Gastrocnemius medialis (tissue), 4 donors: ENCODE measurements at regions of chr6 and their contacts with region 1.

Region 1: GRCh38 chr6:111605100-111605751 is 452 bp downstream of the TRAF3IP2 start:
- DNase-seq: peak; percentile 80 to 92
- ATAC-seq: peak; percentile 58 to 61
- H3K4me3 ChIP-seq: peak overlapping the region; percentile 67 to 91 (median 72)
- H3K27ac ChIP-seq: peak overlapping the region; percentile 92 to 99 (median 97)
- H3K4me1 ChIP-seq: peaks cover 45 to 53% of the 10 kb centered on the region in 2 donors
- H3K27me3 ChIP-seq: no peaks in the 10 kb centered on the region
- CTCF ChIP-seq: no peak
- POLR2A ChIP-seq: peak; percentile 51 to 75

Region 2: DNA sequence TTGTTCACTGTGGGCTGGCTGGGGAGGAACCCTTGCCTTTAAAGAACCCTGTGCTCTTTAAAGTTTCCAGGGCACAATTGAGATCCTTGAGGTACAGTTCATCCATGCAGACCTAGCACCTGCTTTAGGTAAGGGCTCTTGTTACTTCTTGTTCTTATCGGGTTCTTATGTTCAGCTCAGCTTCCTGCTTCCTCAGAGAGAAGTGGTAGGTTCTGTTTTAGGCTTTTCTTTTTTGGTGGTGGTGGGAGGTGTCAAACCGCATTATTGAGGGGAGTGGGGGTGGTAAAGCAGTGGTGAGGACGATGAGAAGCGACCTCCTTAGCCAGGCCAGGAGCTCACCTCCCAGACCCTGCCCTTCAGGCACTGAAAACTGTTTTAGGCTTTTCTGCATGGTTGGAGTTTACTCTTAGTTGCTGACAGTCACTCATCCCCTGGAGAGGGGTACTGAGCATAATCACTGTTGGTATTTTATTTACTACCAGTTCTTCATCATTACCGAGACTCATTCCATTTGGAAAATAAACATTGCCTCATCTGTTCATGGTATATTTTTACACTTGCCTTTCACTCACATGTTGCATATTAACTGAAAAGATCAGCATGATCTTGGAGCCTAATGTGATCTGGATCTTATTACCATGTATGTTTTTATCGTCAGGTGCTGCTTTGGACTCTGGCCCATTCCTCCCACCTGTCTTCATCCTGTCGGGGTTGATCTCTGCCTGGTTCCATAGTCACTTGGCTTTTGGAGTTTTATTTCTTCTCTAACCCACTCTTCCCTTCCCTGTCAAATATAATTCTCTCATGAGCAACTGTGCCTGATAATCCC is 482.6 kb before region 1 on chr6:
- in situ Hi-C with region 1: no loop called
- intact Hi-C with region 1: loop called (anchors 5 kb)
- DNase-seq: peak; percentile 75 to 80
- ATAC-seq: peak; percentile 79 to 82
- H3K4me3 ChIP-seq: peak overlapping the region; percentile 21 to 48 (median 40)
- H3K27ac ChIP-seq: peak overlapping the region; percentile 88 to 98 (median 92)
- H3K4me1 ChIP-seq: peaks cover 36 to 60% of the 10 kb centered on the region in 2 donors
- H3K27me3 ChIP-seq: no peaks in the 10 kb centered on the region
- CTCF ChIP-seq: no peak
- POLR2A ChIP-seq: peak; percentile 29 to 38

Region 3: GRCh38 chr6:111534231-111534751 is 70.9 kb before region 1 on chr6:
- in situ Hi-C with region 1: no loop called
- intact Hi-C with region 1: loop called (anchors 2 kb)
- DNase-seq: peak; percentile 90 to 95
- ATAC-seq: peak; percentile 96 to 97
- H3K4me3 ChIP-seq: peak overlapping the region in 1 of 4 donors; percentile 10
- H3K27ac ChIP-seq: peak overlapping the region; percentile 80 to 90 (median 84)
- H3K4me1 ChIP-seq: peaks cover 31 to 54% of the 10 kb centered on the region in 2 donors
- H3K27me3 ChIP-seq: no peaks in the 10 kb centered on the region
- CTCF ChIP-seq: no peak
- POLR2A ChIP-seq: peak in 1 of 2 donors; percentile 21

Region 4: DNA sequence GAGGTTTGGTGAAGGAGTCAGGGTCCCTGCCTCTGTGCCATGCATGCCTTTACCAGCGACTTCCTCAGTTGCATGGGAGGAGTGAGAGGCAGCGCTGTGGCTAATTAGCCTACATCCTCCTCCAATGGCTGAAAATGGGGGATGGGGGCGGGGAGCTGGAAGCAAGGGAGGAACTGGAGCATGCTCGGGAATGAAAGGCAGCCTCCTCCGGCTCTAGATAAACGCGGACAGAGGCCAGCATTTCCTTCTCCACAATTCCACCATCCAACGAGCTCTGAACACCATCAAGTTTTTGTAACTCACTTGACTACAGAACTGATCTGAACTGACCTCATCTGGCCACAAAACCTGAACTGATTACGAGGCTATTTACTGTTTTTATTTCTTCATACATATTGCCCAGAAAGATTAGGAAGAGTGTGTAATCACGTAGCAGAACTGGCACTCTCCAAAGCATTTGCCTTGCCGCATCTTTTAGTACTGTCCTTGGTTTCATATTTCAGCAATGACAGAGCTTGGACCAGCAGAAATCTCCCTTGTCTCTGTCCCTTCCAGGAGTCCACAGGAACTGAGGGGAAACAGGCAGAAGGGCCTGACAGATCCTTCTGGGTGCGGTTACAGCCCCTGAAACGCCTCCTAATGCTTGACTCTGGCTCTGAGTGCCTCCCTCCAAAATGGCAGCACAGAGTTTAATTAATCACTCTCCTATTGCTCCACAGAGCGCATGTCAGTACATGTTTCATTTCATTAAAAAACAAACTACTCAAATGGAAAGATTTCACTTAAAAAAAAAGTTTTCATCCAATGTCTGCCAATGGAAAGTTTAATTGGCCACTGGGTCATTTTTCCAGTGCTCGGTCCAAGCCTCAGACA is 58.7 kb after region 1 on chr6:
- in situ Hi-C with region 1: no loop called
- intact Hi-C with region 1: loop called (anchors 2 kb)
- DNase-seq: peak; percentile 56 to 77
- ATAC-seq: peak; percentile 63 to 64
- H3K4me3 ChIP-seq: peak overlapping the region; percentile 12 to 52 (median 22)
- H3K27ac ChIP-seq: peak overlapping the region; percentile 88 to 96 (median 95)
- H3K4me1 ChIP-seq: peaks cover 78 to 83% of the 10 kb centered on the region in 2 donors
- H3K27me3 ChIP-seq: no peaks in the 10 kb centered on the region
- CTCF ChIP-seq: peak in 1 of 5 experiments; percentile 6
- POLR2A ChIP-seq: peak; percentile 11 to 59